ENCODE measurements at regions of chr1 and their contacts with region 1.

Region 1: GRCh38 chr1:119787776-119788175 is 19.1 kb upstream of the HMGCS2 start:
- DNase-seq: no peak
- H3K4me3 Mint-ChIP-seq: peak overlapping the region; percentile 11
- H3K27ac Mint-ChIP-seq: no peak overlapping the region
- H3K4me1 Mint-ChIP-seq: peaks cover 38% of the 10 kb centered on the region
- H3K27me3 Mint-ChIP-seq: peaks cover 13% of the 10 kb centered on the region

Region 2: GRCh38 chr1:119816407-119816806 is 28.6 kb after region 1 on chr1:
- intact Hi-C with region 1: loop called (anchors 1 kb)
- DNase-seq: no peak
- H3K4me3 Mint-ChIP-seq: no peak overlapping the region
- H3K27ac Mint-ChIP-seq: no peak overlapping the region
- H3K4me1 Mint-ChIP-seq: no peaks in the 10 kb centered on the region
- H3K27me3 Mint-ChIP-seq: peaks cover 54% of the 10 kb centered on the region

Measured in activated CD4-positive, alpha-beta T cell treated with anti-CD3 and anti-CD28 coated beads, Interleukin-2, amount 10 ng/mL, durations not matched to agents 24 days and 14 days (primary cell).